Ascending aorta (tissue), 2 donors: ENCODE measurements at regions of chr16 and their contacts with region 1.

Region 1: DNA sequence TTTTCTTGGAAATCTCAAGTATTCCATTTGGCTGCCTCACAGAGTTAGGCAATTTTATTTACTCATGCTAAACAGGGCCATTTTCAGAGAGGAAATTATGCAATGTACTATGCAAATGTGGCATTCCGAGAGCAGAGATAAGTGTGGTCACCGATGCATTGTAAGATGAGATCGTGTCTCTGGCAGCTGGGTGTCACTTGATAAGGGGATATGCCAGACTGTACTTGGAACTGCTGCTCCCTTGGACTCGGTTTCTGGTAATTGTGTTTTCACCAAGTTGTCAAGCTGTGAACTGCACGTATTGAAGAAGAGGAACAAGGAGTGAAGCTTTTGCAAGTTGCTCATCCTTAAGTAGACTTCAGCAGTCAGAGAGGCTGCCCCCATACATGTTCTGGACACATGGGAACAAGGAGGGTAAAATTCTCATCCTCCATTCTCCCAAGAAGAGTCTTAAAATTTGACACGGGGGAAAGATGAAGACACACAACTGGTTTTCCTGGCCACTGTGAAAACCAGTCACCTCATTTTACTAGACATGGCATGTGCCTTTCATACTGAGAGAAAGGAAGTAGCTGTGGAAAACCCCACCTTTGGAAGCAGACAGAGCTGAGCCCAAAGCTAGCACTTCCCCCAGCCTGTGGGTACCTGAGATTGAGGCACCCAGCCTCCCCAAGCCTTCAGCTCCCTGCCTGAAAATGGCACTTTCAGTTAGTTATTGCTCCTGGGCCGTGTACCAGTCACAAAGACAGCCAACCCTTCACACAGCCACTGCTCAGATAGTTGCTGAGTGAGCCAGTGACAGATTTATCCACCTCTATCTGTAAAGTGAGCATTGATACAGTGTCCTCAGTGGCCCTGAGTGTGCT is 150.7 kb downstream of the SOCS1 start:
- DNase-seq: peak in 1 of 2 donors; percentile 79
- H3K4me3 ChIP-seq: peak overlapping the region in 1 of 2 donors; percentile 18
- H3K27ac ChIP-seq: peak overlapping the region; percentile 31 to 83
- H3K4me1 ChIP-seq: peaks cover 26 to 54% of the 10 kb centered on the region in 2 donors
- H3K27me3 ChIP-seq: no peaks in the 10 kb centered on the region
- CTCF ChIP-seq: no peak

Region 2: DNA sequence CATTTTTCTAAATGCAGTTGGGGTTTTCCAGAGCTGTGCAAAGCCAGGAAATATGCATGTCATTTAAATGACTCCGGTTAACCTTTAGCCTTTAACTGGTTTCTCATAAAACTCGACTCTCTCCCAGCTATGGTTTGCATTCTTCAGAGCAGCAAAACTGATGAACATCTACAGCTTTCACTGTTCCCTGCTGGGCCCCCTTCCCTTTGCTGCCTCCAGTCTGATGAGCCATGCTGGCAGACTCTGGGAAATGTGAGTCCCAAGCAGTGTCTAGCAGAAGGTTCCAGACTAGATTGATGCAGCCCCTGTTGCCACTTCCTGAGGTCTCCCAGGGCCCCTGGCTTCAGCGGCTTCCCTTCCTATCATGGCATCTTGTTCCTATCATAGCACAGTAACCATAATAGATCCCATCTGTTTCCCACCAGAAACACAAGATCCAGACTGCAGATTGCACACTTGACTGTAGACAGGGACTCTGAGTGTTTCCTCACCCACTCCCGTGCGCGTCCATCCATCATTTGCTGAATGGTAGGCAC is 25.6 kb before region 1 on chr16:
- intact Hi-C with region 1: loop called (anchors 2 kb)
- DNase-seq: no peak
- H3K4me3 ChIP-seq: no peak overlapping the region
- H3K27ac ChIP-seq: peak overlapping the region; percentile 71 to 86
- H3K4me1 ChIP-seq: peaks cover 6 to 34% of the 10 kb centered on the region in 2 donors
- H3K27me3 ChIP-seq: no peaks in the 10 kb centered on the region
- CTCF ChIP-seq: no peak

Region 3: GRCh38 chr16:11164482-11165270 is 59.4 kb after region 1 on chr16:
- intact Hi-C with region 1: loop called (anchors 5 kb)
- DNase-seq: no peak
- H3K4me3 ChIP-seq: no peak overlapping the region
- H3K27ac ChIP-seq: peak overlapping the region in 1 of 2 donors; percentile 97
- H3K4me1 ChIP-seq: peaks cover 15 to 23% of the 10 kb centered on the region in 2 donors
- H3K27me3 ChIP-seq: no peaks in the 10 kb centered on the region
- CTCF ChIP-seq: no peak